ENCODE measurements at regions of chr11 and their contacts with region 1.

Region 1: DNA sequence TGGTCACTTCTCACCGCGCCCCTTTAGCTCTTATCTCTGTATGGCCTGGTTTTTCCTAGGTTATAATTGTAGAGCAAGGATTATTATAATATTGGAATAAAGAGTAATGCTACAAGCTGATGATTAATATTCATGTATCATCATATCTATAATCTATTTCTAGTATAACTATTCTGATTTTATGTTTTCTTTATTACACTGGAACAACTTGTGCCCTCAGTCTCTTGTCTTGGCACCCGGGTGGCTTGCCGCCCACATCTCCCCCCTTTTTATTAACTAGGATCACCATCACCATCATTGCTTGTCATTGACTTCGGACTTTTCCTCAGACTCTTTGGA is 11.0 kb downstream of the OR52K1 start:
- DNase-seq: no peak
- H3K4me3 ChIP-seq: no peak overlapping the region
- H3K27ac ChIP-seq: no peak overlapping the region
- H3K4me1 ChIP-seq: no peaks in the 10 kb centered on the region
- H3K27me3 ChIP-seq: peaks cover 0 to 12% (median 3%) of the 10 kb centered on the region in 5 experiments

Region 2: DNA sequence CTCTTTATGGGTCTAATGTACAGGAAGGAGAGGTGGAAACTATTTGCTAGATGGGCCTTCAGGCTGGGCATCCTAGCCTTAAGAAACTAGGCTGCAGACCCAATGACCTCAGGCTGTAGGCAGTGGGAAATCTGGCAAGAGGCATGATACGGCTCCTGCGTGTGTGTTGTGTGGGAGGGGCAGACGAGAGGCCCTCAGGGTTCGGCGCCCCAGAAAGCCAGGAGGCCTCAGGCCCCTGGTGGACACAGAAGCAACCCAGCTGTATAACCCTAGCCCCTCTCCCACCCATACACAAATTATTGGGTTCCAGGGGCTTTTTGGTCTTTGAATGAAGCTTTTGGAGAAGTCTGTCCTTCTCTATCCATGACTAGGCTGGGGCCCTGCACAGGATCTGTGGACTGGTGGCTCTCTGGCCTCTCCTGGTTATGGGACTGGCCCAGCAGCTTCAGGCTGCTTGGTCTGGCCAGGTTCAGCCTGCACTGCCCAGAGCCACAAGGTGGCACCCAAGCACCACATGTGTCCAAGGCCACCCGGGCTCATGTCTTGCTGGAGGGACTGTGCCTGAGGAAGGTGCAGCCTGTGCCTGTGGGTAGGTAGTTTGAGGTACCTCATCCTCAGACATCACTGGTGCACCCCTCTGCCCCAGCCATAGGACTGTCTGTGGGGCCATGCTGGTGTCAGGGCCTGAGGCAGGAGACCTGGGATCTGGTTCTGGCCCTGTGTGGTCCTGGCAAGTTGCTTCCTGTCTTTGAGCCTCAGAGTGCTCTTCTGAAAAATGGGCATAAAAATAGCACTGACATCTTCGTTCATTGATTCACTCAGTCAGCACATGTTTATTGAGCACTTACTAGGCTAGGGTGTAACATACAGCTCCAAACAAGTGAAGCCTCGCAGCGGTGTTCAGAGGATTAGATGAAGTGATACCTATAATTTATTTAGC is 311.4 kb before region 1 on chr11:
- CTCF ChIA-PET with region 1: interaction called, 62 read pairs
- POLR2A ChIA-PET with region 1: no interaction called
- DNase-seq: peak; percentile 63 to 75 (median 74)
- H3K4me3 ChIP-seq: no peak overlapping the region
- H3K27ac ChIP-seq: no peak overlapping the region
- H3K4me1 ChIP-seq: peaks cover 0 to 19% (median 11%) of the 10 kb centered on the region in 4 experiments
- H3K27me3 ChIP-seq: no peaks in the 10 kb centered on the region

Region 3: DNA sequence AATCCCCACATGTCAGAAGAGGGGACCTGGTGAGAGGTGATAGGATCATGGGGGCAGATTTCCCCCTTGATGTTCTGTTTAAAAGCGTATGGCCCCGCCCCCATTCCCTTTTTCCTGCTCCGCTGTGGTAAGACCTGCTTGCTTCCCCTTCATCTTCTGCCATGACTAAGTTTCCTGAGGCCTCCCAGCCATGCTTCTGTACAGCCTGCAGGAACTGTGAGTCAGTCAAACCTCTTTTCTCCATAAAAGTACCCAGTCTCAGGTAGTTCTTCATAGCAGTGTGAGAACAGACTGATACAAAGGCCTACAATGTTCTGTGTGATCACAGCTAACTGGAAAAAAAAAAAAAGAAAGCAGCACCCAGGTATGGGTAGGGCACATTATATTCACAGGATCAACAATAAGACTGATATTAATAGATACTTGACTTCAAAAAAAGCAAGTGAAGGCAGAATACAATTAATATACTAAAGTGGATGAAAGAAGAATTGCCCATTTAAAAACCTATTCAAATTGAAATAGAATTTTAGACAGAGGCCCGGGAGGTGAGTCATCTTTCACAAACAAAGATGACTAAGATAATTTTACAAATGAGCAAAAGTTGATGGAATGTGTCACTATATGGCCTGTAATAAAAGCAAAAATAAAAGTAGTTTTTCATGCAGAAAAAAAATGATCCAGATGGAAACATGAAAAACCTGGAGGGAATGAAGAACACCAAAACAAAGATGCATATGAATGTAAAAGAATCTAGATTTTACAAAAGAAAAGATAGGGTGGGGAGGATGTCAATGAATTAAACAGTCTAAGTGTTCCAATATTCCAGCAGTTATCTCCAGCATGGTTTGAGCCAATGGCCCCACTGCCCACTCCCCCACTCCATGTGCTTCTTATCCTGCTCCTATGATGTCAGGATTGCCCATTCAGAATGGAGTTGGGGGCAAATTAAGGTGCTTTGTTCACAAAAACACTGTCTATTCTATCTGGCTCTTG is 12.6 kb before region 1 on chr11:
- CTCF ChIA-PET with region 1: interaction called, 13 read pairs
- POLR2A ChIA-PET with region 1: no interaction called
- DNase-seq: peak in 1 of 3 donors; percentile 8
- H3K4me3 ChIP-seq: no peak overlapping the region
- H3K27ac ChIP-seq: no peak overlapping the region
- H3K4me1 ChIP-seq: peaks cover 0 to 3% (median 0%) of the 10 kb centered on the region in 4 experiments
- H3K27me3 ChIP-seq: peaks cover 0 to 11% (median 0%) of the 10 kb centered on the region in 5 experiments

Region 4: DNA sequence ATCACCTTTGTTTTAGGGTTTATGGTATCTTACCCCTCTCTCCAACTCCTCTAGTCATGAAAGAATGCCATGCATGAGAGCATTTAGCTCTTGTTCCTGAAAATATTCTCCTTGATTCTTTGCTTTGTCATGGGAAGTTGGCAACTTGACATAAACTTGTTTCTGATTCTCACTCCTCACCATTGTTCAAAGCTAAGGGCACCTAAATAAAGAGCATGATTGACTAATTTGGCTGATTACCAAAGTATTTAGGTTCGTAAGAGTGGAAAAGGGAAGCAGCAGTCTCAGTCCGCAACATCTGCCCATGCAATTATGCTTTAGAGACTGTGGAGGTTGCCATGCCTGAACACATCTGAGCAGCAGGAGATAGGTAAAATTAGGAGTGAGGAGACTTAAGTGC is 15.4 kb after region 1 on chr11:
- CTCF ChIA-PET with region 1: no interaction called
- POLR2A ChIA-PET with region 1: no interaction called
- DNase-seq: peak; percentile 17 to 76 (median 27)
- H3K4me3 ChIP-seq: no peak overlapping the region
- H3K27ac ChIP-seq: no peak overlapping the region
- H3K4me1 ChIP-seq: peaks cover 0 to 2% (median 0%) of the 10 kb centered on the region in 4 experiments
- H3K27me3 ChIP-seq: peaks cover 0 to 5% (median 0%) of the 10 kb centered on the region in 5 experiments

Measured in common myeloid progenitor, CD34-positive (primary cell).